Brain microvascular endothelial cell (primary cell): ENCODE measurements at regions of chr2 and their contacts with region 1.

Region 1: DNA sequence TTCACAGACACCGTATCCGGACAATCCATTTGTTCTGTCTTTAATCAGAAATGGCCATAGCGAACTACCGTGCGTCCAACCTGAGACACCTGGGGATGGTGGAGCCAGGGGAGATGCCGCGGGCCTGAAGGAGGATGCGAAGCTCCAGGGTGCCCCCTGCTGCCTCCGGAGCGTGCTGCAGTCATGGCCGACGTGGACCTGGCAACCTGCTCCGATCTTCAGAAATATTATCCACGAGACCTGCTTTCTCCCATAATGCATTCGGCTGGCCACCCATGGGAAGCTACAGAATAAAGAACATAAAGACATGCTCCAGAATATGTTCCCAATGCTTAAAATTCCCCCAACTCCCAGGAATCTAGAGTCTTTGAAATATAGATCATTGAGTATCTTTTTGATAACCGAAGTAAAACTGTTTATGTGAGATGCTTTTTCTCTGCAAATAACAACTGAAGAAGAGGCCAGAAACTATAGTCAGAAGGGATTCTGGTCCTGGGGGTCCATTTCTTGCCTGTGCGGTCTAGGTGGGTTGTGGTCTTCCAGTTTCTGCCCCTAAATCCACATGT is 30.7 kb upstream of the SLC66A3 start:
- DNase-seq: peak; percentile 47
- H3K4me3 ChIP-seq: no peak overlapping the region
- H3K27ac ChIP-seq: no peak overlapping the region
- H3K27me3 ChIP-seq: no peaks in the 10 kb centered on the region
- CTCF ChIP-seq: peak; percentile 98

Region 2: GRCh38 chr2:10700078-10700803 is 424.3 kb before region 1 on chr2:
- in situ Hi-C with region 1: no loop called
- DNase-seq: no peak
- H3K4me3 ChIP-seq: no peak overlapping the region
- H3K27ac ChIP-seq: no peak overlapping the region
- H3K27me3 ChIP-seq: no peaks in the 10 kb centered on the region
- CTCF ChIP-seq: no peak

Region 3: GRCh38 chr2:11465497-11466406 is 341.2 kb after region 1 on chr2 and contains the start of gene E2F6:
- in situ Hi-C with region 1: loop called (anchors 25 kb)
- DNase-seq: peak; percentile 88
- H3K4me3 ChIP-seq: peak within 1 kb of the TSS; percentile 65
- H3K27ac ChIP-seq: peak within 1 kb of the TSS; percentile 81
- H3K27me3 ChIP-seq: no peaks in the 10 kb centered on the region
- CTCF ChIP-seq: no peak